ENCODE measurements at regions of chr1 and their contacts with region 1.

Region 1: GRCh38 chr1:212455803-212456528 is 23.2 kb downstream of the NENF start:
- DNase-seq: peak; percentile 65 to 73 (median 69)
- H3K4me3 ChIP-seq: no peak overlapping the region
- H3K4me3 Mint-ChIP-seq: no peak overlapping the region
- H3K27ac ChIP-seq: no peak overlapping the region
- H3K27ac Mint-ChIP-seq: no peak overlapping the region
- H3K4me1 ChIP-seq: peaks cover 3% of the 10 kb centered on the region
- H3K4me1 Mint-ChIP-seq: peaks cover 0 to 10% (median under 1%) of the 10 kb centered on the region in 4 donors
- H3K27me3 ChIP-seq: no peaks in the 10 kb centered on the region
- H3K27me3 Mint-ChIP-seq: no peaks in the 10 kb centered on the region

Region 2: GRCh38 chr1:211675230-211676105 is 780.5 kb before region 1 on chr1 and contains the start of gene NEK2:
- CTCF ChIA-PET with region 1: interaction called, 95 read pairs
- POLR2A ChIA-PET with region 1: interaction called, 6 read pairs
- intact Hi-C with region 1: loop called (anchors 1 kb)
- DNase-seq: peak; percentile 83 to 93 (median 86)
- H3K4me3 ChIP-seq: peak within 1 kb of the TSS; percentile 44 to 83
- H3K4me3 Mint-ChIP-seq: peak within 1 kb of the TSS; percentile 89 to 94 (median 92)
- H3K27ac ChIP-seq: peak within 1 kb of the TSS; percentile 49
- H3K27ac Mint-ChIP-seq: peak within 1 kb of the TSS; percentile 81 to 92 (median 86)
- H3K4me1 ChIP-seq: peaks cover 12% of the 10 kb centered on the region
- H3K4me1 Mint-ChIP-seq: peaks cover 6 to 22% (median 12%) of the 10 kb centered on the region in 4 donors
- H3K27me3 ChIP-seq: no peaks in the 10 kb centered on the region
- H3K27me3 Mint-ChIP-seq: no peaks in the 10 kb centered on the region
- total RNA-seq, gene NEK2: not detected

Region 3: DNA sequence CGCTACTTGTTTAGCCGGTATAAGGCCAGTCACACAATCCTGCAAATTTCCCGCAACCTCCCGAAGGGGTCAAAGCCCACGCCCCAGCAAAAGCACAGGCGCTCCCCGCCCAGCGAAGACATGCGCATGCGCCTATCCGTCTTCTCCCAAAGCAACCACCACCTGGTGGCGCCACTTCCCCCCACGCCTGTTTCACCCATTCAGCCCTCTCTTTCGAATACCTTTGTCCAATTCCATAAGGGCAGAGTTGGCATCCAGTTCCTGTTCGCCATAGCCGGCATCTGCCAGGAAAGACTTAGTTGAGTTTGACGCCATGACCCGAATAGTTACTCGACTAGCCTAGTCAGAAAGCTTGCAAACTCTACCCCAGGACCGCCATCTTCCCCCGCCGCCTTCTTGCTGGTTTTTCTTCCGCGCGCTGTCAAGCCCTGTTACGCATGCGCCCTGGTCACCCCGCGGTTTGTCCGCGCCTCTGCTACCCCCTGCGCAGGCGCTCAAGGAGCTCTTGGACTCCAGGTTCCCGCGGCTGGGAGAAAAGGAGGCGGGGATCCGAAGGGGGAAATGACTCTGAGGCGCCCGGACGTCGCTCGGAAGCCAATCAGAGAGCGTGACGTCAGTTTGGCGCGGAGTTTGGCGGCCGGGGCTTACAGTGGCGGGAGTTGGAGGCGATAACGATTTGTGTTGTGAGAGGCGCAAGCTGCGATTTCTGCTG is 420.7 kb before region 1 on chr1 and contains the starts of genes DTL and INTS7:
- CTCF ChIA-PET with region 1: interaction called, 29 read pairs
- POLR2A ChIA-PET with region 1: interaction called, 4 read pairs
- intact Hi-C with region 1: loop called (anchors 1 kb)
- DNase-seq: peak; percentile 99
- H3K4me3 ChIP-seq: peak within 1 kb of the TSS; percentile 68 to 78
- H3K4me3 Mint-ChIP-seq: peak within 1 kb of the TSS; percentile 90 to 99 (median 98)
- H3K27ac ChIP-seq: peak within 1 kb of the TSS; percentile 75
- H3K27ac Mint-ChIP-seq: peak within 1 kb of the TSS; percentile 92 to 99 (median 98)
- H3K4me1 ChIP-seq: peaks cover 58% of the 10 kb centered on the region
- H3K4me1 Mint-ChIP-seq: peaks cover 36 to 70% (median 48%) of the 10 kb centered on the region in 4 donors
- H3K27me3 ChIP-seq: no peaks in the 10 kb centered on the region
- H3K27me3 Mint-ChIP-seq: no peaks in the 10 kb centered on the region
- total RNA-seq, gene DTL: 0.06 to 0.15 TPM
- total RNA-seq, gene INTS7: 9.5 to 12.4 TPM

Region 4: DNA sequence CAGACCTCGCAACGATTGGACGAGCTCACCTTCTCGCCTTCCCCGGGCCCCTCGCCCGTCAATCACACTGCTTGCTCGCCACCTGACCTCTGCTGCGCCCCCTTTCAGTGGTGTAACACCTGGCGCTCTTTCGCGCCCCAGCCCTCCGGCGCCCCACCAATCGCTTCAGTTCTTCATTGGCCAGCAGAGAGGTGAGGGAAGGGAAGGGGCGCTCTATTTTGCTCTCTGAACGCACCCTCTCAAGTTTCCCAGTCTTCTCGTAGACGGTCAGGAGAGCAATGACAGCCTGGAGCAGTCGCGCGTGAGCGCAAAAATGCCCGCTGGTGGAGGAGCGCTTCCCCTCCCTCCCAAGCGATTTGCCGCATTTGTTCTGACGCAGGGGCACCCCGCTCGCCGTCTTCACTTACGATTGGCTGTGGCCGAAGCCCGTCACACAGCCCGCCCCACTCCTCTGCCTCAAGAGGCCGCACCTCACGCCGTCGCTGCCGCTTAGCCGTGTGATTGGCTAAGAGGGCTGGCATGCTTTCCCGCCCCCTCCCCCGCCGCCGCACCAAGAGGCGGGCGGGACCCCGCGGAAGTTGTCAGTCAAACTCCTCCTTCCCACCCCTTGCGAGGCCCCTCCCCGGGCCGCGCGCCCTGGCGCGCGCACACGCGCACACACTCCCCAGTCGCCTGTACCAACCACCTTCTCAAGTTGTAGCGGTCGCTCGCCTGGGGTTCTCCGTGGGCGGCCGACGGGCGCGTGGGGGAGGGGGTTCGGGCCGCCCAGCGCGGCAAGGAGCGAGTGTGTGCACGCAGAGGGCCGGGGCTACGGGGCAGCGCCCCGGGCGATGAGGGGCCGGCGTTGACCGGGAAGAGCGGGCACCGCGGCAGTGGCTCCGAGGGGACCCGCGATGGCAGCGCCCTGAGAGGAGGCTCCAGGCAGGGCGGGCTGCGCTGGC is 171.0 kb before region 1 on chr1 and contains the start of gene PPP2R5A:
- CTCF ChIA-PET with region 1: interaction called, 14 read pairs
- POLR2A ChIA-PET with region 1: no interaction called
- intact Hi-C with region 1: no loop called
- DNase-seq: peak; percentile 98 to 99 (median 99)
- H3K4me3 ChIP-seq: peak within 1 kb of the TSS; percentile 85 to 99
- H3K4me3 Mint-ChIP-seq: peak within 1 kb of the TSS; percentile 99 to 100 (median 100)
- H3K27ac ChIP-seq: peak within 1 kb of the TSS; percentile 92
- H3K27ac Mint-ChIP-seq: peak within 1 kb of the TSS; percentile 94 to 99 (median 99)
- H3K4me1 ChIP-seq: peaks cover 34% of the 10 kb centered on the region
- H3K4me1 Mint-ChIP-seq: peaks cover 26 to 49% (median 37%) of the 10 kb centered on the region in 4 donors
- H3K27me3 ChIP-seq: no peaks in the 10 kb centered on the region
- H3K27me3 Mint-ChIP-seq: no peaks in the 10 kb centered on the region
- total RNA-seq, gene PPP2R5A: 53.8 to 55.0 TPM

Region 5: GRCh38 chr1:212375986-212376385 is 80.0 kb before region 1 on chr1:
- CTCF ChIA-PET with region 1: interaction called, 12 read pairs
- POLR2A ChIA-PET with region 1: no interaction called
- intact Hi-C with region 1: no loop called
- DNase-seq: no peak
- H3K4me3 ChIP-seq: no peak overlapping the region
- H3K4me3 Mint-ChIP-seq: no peak overlapping the region
- H3K27ac ChIP-seq: no peak overlapping the region
- H3K27ac Mint-ChIP-seq: peak overlapping the region in 4 of 7 donors; percentile 4 to 45 (median 20)
- H3K4me1 ChIP-seq: no peaks in the 10 kb centered on the region
- H3K4me1 Mint-ChIP-seq: no peaks in the 10 kb centered on the region
- H3K27me3 ChIP-seq: no peaks in the 10 kb centered on the region
- H3K27me3 Mint-ChIP-seq: no peaks in the 10 kb centered on the region

Region 6: DNA sequence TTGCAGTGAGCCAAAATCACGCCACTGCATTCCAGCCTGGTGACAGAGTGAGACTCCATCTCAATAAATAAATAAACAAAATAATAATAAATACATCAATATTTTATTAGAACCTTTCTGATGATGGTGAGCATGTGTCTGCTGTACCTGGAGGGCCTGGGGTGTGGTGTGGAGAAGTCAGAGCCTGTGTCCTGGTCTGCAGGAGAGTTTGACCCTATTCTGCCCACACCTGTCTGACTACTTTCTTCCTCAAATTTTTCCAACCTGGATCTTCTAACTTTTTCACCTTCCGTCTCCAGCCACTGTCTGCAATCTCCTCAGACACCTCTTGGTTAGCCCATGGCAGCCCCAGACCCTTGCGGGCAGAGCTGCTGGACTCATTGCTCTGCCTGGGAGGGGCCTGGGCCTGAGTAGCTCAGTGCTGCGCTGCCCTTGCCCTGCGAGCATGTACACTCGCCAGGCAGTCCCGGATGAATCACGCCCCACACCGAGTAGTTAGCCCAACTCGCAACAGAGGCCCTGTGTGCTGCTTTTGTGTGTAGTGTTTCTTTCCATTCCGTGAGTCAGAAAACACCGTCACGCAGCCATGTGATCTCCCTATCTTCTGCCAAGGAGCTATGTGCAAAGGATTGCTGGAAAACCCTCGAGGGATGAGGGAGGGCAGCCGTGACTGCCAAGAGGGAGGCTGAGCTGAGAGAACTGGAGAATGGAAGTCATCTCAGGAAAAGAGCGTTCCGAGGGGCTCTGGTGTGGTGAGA is 13.9 kb after region 1 on chr1:
- CTCF ChIA-PET with region 1: interaction called, 69 read pairs
- POLR2A ChIA-PET with region 1: no interaction called
- intact Hi-C with region 1: no loop called
- DNase-seq: no peak
- H3K4me3 ChIP-seq: no peak overlapping the region
- H3K4me3 Mint-ChIP-seq: no peak overlapping the region
- H3K27ac ChIP-seq: no peak overlapping the region
- H3K27ac Mint-ChIP-seq: peak overlapping the region in 2 of 7 donors; percentile 32 to 74
- H3K4me1 ChIP-seq: no peaks in the 10 kb centered on the region
- H3K4me1 Mint-ChIP-seq: peaks cover 0 to 2% (median 0%) of the 10 kb centered on the region in 4 donors
- H3K27me3 ChIP-seq: no peaks in the 10 kb centered on the region
- H3K27me3 Mint-ChIP-seq: no peaks in the 10 kb centered on the region